ENCODE measurements at regions of chr7 and their contacts with region 1.

Region 1: GRCh38 chr7:6272481-6273323 is at the start of gene CYTH3:
- DNase-seq: peak; percentile 88
- H3K4me3 ChIP-seq: peak within 1 kb of the TSS; percentile 70 to 98 (median 92)
- H3K27ac ChIP-seq: peak within 1 kb of the TSS; percentile 77 to 84 (median 78)
- H3K4me1 ChIP-seq: peaks cover 0 to 23% (median 16%) of the 10 kb centered on the region in 4 donors
- H3K27me3 ChIP-seq: no peaks in the 10 kb centered on the region
- CTCF ChIP-seq: no peak
- EP300 ChIP-seq: no peak
- POLR2A ChIP-seq: no peak
- total RNA-seq, gene CYTH3: 27.1 to 34.8 (median 29.3) TPM

Region 2: GRCh38 chr7:6106140-6106904 is 166.4 kb before region 1 on chr7:
- intact Hi-C with region 1: no loop called
- DNase-seq: peak; percentile 56
- H3K4me3 ChIP-seq: peak overlapping the region; percentile 45 to 80 (median 76)
- H3K27ac ChIP-seq: peak overlapping the region; percentile 83 to 92 (median 88)
- H3K4me1 ChIP-seq: peaks cover 0 to 25% (median 20%) of the 10 kb centered on the region in 4 donors
- H3K27me3 ChIP-seq: no peaks in the 10 kb centered on the region
- CTCF ChIP-seq: peak in 1 of 4 experiments; percentile 32
- EP300 ChIP-seq: no peak
- POLR2A ChIP-seq: no peak

Region 3: DNA sequence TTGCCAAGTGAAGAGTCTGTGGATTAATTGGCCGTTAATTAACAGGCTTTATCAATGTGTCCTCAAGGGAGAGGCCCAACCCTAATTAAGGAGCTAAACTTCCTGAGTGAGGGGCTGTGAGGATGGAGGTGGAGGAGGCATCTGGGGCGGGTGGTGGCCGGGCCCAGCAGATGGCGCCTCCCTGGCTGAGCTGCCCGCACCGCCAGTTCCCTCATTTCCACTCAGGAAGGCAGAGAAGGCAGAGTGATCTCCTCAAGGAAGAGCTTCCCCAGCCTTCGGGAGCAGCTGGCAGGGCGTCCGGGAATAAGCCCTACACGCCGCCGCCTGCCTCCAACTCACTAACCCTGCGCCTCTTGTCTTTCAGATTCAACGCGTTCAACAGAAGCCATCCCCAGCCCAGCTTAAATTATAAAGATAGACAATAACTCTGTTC is 112.5 kb before region 1 on chr7:
- intact Hi-C with region 1: loop called (anchors 2 kb)
- DNase-seq: peak; percentile 92
- H3K4me3 ChIP-seq: no peak overlapping the region
- H3K27ac ChIP-seq: peak overlapping the region; percentile 58 to 74 (median 64)
- H3K4me1 ChIP-seq: peaks cover 0 to 29% (median 15%) of the 10 kb centered on the region in 4 donors
- H3K27me3 ChIP-seq: no peaks in the 10 kb centered on the region
- CTCF ChIP-seq: peak; percentile 54 to 85 (median 68)
- EP300 ChIP-seq: no peak
- POLR2A ChIP-seq: no peak

Region 4: GRCh38 chr7:6435486-6436384 is 163.0 kb after region 1 on chr7:
- intact Hi-C with region 1: loop called (anchors 5 kb)
- DNase-seq: peak; percentile 90
- H3K4me3 ChIP-seq: peak overlapping the region in 2 of 4 donors; percentile 11 to 22
- H3K27ac ChIP-seq: peak overlapping the region; percentile 34 to 65 (median 61)
- H3K4me1 ChIP-seq: peaks cover 0 to 21% (median 10%) of the 10 kb centered on the region in 4 donors
- H3K27me3 ChIP-seq: no peaks in the 10 kb centered on the region
- CTCF ChIP-seq: peak; percentile 75 to 98 (median 92)
- EP300 ChIP-seq: no peak
- POLR2A ChIP-seq: no peak

Measured in sigmoid colon (tissue), 7 donors.